Activated T-helper 2 cell treated with anti-CD3 and anti-CD28 coated beads, Interferon-gamma antibody, Interleukin-2, Interleukin-4, amounts not matched to agents 10 μg/mL and 5 μg/mL and 100 μg/mL, durations not matched to agents 14 hours and 24 hours and 36 hours (primary cell): ENCODE measurements at regions of chr2 and their contacts with region 1.

Region 1: GRCh38 chr2:25558262-25558661 is 115.1 kb downstream of the DTNB start:
- DNase-seq: peak; percentile 61
- H3K4me3 Mint-ChIP-seq: peak overlapping the region; percentile 34
- H3K27ac Mint-ChIP-seq: peak overlapping the region; percentile 94
- H3K4me1 Mint-ChIP-seq: peaks cover 59% of the 10 kb centered on the region
- H3K27me3 Mint-ChIP-seq: no peaks in the 10 kb centered on the region

Region 2: GRCh38 chr2:25342372-25343186 is 215.7 kb before region 1 on chr2:
- intact Hi-C with region 1: loop called (anchors 1 kb)
- DNase-seq: peak; percentile 81
- H3K4me3 Mint-ChIP-seq: peak overlapping the region; percentile 83
- H3K27ac Mint-ChIP-seq: peak overlapping the region; percentile 78
- H3K4me1 Mint-ChIP-seq: peaks cover 30% of the 10 kb centered on the region
- H3K27me3 Mint-ChIP-seq: no peaks in the 10 kb centered on the region

Region 3: GRCh38 chr2:25376750-25377621 is 181.3 kb before region 1 on chr2:
- intact Hi-C with region 1: loop called (anchors 1 kb)
- DNase-seq: peak; percentile 90
- H3K4me3 Mint-ChIP-seq: peak overlapping the region; percentile 62
- H3K27ac Mint-ChIP-seq: peak overlapping the region; percentile 98
- H3K4me1 Mint-ChIP-seq: peaks cover 30% of the 10 kb centered on the region
- H3K27me3 Mint-ChIP-seq: no peaks in the 10 kb centered on the region

Region 4: GRCh38 chr2:25521665-25522387 is 36.4 kb before region 1 on chr2:
- intact Hi-C with region 1: loop called (anchors 2 kb)
- DNase-seq: peak; percentile 26
- H3K4me3 Mint-ChIP-seq: peak overlapping the region; percentile 17
- H3K27ac Mint-ChIP-seq: peak overlapping the region; percentile 50
- H3K4me1 Mint-ChIP-seq: peaks cover 20% of the 10 kb centered on the region
- H3K27me3 Mint-ChIP-seq: no peaks in the 10 kb centered on the region

Region 5: DNA sequence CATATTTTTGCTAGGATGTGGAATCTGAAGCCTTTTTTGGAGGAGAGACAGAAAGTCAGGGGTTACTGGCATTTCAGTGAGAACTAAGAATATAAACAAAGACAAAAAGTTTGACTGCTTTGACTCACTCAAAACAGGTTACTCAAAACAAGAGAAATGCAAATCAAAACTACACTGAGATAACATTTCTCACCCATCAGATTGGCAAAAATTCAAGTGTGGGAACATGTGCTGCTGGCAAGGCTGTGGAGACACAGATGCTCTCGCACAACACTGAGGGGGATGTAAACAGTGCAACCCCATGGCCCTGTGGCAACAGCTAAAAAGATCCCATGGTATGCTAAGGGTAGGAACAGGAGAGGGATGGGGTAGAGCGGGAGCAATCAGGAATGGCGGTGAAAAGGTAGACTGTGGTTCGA is 28.5 kb after region 1 on chr2:
- intact Hi-C with region 1: loop called (anchors 1 kb)
- DNase-seq: no peak
- H3K4me3 Mint-ChIP-seq: peak overlapping the region; percentile 67
- H3K27ac Mint-ChIP-seq: peak overlapping the region; percentile 96
- H3K4me1 Mint-ChIP-seq: peaks cover 28% of the 10 kb centered on the region
- H3K27me3 Mint-ChIP-seq: no peaks in the 10 kb centered on the region